HCT116 (cell line): ENCODE measurements at regions of chr2 and their contacts with region 1.

Region 1: DNA sequence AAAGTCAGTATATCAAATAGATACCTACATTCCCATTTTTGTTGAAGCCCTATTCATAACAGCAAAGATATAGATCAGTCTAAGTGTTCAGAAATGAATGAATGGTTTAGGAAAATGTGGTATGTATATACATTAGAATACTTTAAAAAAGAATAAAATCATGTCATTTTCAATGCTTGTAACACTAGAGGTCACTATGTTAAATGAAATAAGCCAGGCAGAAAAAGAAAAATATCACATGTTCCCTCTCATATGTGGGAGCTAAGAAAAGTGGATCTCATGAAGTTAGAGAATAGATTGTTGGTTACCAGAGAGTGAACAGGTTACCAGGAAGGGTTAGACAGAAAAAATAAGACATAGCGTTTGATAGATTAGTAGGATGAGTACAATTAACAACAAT is 1111.0 kb upstream of the SLC39A10 start:
- DNase-seq: peak; percentile 2
- ATAC-seq: no peak
- H3K4me3 ChIP-seq: no peak overlapping the region
- H3K27ac ChIP-seq: no peak overlapping the region
- H3K4me1 ChIP-seq: peaks cover 0 to 7% of the 10 kb centered on the region in 2 experiments; a peak in 1 of 4 replicates
- H3K27me3 ChIP-seq: no peaks in the 10 kb centered on the region
- CTCF ChIP-seq: peak in 2 of 3 experiments; percentile 41 to 49; a peak in 2 of 6 replicates
- POLR2A ChIP-seq: no peak
- RAD21 ChIP-seq: peak; percentile 69

Region 2: GRCh38 chr2:194819344-194819743 is 273.4 kb after region 1 on chr2:
- CTCF ChIA-PET with region 1: no interaction called
- POLR2A ChIA-PET with region 1: no interaction called
- RAD21 ChIA-PET with region 1: no interaction called
- intact Hi-C with region 1: loop called (anchors 5 kb)
- DNase-seq: no peak
- ATAC-seq: no peak
- H3K4me3 ChIP-seq: no peak overlapping the region
- H3K27ac ChIP-seq: no peak overlapping the region
- H3K4me1 ChIP-seq: peaks cover 3 to 10% of the 10 kb centered on the region in 2 experiments; a peak in 2 of 4 replicates
- H3K27me3 ChIP-seq: no peaks in the 10 kb centered on the region
- CTCF ChIP-seq: peak; percentile 6 to 41 (median 29); a peak in 1 of 6 replicates
- POLR2A ChIP-seq: no peak
- RAD21 ChIP-seq: peak; percentile 62

Region 3: DNA sequence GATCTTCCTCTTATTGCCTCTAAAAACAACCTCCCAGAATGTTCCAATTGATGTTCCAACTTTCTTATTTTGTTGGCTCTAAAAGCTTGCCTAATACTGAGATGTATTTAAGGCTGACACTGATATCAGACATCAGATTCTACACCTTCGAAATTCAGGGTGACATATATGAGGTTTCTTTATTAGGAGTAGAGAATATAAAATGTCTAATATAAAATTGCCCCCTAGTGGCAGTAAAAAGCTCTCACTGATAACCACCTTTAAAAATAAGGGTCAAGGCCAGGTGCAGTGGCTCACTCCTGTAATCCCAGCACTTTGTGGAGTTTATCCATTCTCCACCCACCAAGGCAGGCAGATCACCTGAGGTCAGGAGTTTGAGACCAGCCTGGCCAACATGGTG is 321.4 kb after region 1 on chr2:
- CTCF ChIA-PET with region 1: interaction called, 5 read pairs
- POLR2A ChIA-PET with region 1: no interaction called
- RAD21 ChIA-PET with region 1: no interaction called
- intact Hi-C with region 1: loop called (anchors 5 kb)
- DNase-seq: no peak
- ATAC-seq: peak; percentile 84
- H3K4me3 ChIP-seq: no peak overlapping the region
- H3K27ac ChIP-seq: no peak overlapping the region
- H3K4me1 ChIP-seq: no peaks in the 10 kb centered on the region
- H3K27me3 ChIP-seq: no peaks in the 10 kb centered on the region
- CTCF ChIP-seq: peak; percentile 36 to 61 (median 43); a peak in 5 of 6 replicates
- POLR2A ChIP-seq: no peak
- RAD21 ChIP-seq: peak; percentile 62